Kidney (tissue), 22 donors: ENCODE measurements at regions of chr17 and their contacts with region 1.

Region 1: DNA sequence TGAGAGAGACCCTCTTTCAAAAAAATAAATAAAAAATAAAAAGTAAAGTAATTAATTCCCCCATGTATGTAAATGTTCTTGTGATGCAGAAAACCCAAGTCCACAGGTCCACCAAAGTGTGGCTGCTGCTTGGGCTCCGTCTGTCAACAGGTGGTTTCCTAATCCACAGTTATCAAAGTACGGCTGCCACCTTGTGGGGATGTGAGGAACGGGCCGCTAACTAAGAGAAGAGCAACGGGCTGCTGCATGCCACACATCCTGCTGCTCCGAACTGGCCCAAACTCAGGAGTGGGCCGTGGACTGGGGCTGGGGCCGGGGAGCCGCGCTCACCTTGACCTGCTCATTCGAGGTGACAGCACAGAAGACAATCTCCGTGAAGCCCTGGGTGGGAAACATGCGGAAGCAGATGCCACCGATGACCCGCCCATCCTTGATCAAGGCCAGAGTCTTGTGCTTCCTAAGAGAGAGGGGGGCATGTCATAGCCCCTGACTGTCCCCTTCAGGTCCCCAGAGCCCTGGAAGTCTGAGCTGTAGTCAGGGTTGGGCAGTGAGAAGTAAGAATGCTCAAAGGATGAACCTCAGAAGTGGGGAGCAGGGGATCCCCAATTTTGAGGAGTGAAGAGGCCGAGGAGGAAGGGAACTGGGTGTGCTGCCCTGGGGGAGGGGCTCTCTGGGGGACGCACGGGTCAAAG is 4.3 kb downstream of the KAT2A start:
- DNase-seq: peak; percentile 86 to 94 (median 89)
- H3K4me3 ChIP-seq: no peak overlapping the region
- H3K27ac ChIP-seq: no peak overlapping the region
- H3K4me1 ChIP-seq: peaks cover 0 to 17% (median 13%) of the 10 kb centered on the region in 3 donors
- H3K27me3 ChIP-seq: no peaks in the 10 kb centered on the region
- CTCF ChIP-seq: peak; percentile 87

Region 2: DNA sequence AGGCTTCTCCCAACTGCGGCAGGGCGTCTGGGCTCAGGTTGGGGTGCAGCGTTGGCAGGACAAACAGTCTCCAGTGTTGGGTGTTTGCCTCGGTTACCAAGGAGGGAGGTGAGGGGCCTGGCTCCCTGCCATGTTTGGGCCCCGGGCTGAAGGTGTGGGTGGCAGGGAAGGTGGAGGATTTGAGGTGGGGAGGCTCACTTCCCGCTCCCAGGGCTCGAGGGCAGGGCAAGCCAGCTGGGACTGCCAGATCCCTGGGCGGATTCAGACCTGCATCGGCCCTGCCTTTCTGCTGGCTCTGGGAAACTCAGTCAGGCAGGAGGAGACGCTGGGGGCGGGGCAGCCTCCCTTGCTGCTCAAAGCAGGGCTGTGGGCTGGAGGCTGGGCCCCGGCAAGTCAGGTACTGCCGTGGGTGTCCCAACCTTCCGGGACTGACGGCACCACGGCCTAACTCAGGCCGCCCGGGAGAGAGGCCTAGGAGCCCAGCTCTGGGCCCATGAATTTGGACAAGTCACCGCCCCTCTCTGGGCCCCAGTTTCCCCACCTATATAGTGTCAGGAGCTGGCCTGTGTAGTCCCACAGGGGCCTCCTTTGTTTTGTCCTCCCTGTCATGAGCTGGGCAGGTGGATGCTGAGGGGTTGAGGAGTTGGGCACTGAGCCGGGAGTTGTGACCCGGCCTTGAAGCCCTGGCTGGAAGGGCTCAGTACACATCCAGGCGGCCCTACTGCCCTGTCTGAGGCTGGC is 461.1 kb before region 1 on chr17:
- intact Hi-C with region 1: no loop called
- DNase-seq: peak; percentile 83 to 97 (median 89)
- H3K4me3 ChIP-seq: no peak overlapping the region
- H3K27ac ChIP-seq: peak overlapping the region; percentile 94
- H3K4me1 ChIP-seq: peaks cover 6 to 60% (median 42%) of the 10 kb centered on the region in 3 donors
- H3K27me3 ChIP-seq: no peaks in the 10 kb centered on the region
- CTCF ChIP-seq: no peak

Region 3: DNA sequence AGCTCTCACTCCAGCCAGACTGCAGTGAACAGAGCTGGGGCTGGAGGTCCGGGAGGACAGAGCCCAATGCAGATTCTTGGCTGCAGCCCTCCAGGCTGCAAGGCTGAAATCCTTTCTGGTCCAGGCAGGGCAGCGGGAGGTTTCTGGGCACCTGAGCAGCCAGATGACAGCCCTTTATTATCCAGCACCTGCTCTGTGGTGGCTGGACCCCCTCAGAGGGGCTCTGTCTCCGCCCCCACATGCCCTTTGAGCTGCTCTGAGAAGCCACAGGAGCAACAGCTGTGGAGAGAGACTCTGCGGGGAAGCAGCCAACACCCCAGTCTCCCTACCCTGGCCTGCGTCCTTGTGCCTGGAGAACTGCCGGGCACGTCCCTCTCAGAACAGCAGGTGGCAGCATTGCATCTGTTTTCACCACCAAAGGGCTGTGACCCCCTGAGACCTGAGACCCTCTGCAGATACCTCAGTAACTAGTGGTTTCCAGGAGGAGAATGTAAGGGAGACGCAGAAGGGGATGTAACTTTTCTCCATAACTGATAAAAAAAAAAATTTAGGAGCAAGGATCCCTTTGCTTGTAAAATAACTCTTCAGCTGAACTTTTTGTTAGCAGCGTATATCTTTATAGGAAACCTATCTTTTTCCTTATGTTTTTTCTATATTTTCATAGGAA is 153.9 kb before region 1 on chr17:
- intact Hi-C with region 1: loop called (anchors 5 kb)
- DNase-seq: peak; percentile 80 to 86 (median 84)
- H3K4me3 ChIP-seq: no peak overlapping the region
- H3K27ac ChIP-seq: no peak overlapping the region
- H3K4me1 ChIP-seq: peaks cover 0 to 20% (median 3%) of the 10 kb centered on the region in 3 donors
- H3K27me3 ChIP-seq: no peaks in the 10 kb centered on the region
- CTCF ChIP-seq: peak; percentile 91